BJ (cell line): ENCODE measurements at regions of chr2 and their contacts with region 1.

Region 1: DNA sequence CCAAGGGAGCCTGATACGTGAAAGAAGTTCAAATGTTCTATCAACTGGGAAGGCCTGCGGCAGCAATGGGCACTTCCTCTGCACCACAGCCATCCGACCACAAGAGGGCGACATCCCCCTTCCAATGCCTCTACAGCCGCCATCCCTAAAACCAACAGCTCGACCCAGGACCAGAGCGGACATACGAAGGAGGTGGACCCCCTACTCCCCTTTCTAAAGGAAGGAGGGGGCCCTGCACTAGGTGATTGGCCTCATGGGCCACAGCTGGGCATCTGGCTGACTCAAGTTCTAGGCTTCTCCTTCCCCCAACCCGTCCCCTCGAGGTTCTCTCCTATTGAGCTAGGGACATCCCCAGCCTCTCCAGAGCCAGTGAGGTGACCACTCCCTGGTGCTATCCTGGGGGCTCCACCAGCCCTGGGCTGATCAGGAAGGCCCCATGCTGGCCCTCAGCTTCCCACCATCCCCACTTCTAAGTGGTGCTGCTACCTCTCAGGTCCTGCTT is 217.2 kb downstream of the TNS1 start:
- DNase-seq: no peak
- H3K4me3 ChIP-seq: no peak overlapping the region
- H3K27me3 ChIP-seq: no peaks in the 10 kb centered on the region
- CTCF ChIP-seq: peak; percentile 95

Region 2: GRCh38 chr2:217440000-217440399 is 345.6 kb before region 1 on chr2:
- CTCF ChIA-PET with region 1: no interaction called
- POLR2A ChIA-PET with region 1: no interaction called
- DNase-seq: no peak
- H3K4me3 ChIP-seq: no peak overlapping the region
- H3K27me3 ChIP-seq: no peaks in the 10 kb centered on the region
- CTCF ChIP-seq: no peak

Region 3: DNA sequence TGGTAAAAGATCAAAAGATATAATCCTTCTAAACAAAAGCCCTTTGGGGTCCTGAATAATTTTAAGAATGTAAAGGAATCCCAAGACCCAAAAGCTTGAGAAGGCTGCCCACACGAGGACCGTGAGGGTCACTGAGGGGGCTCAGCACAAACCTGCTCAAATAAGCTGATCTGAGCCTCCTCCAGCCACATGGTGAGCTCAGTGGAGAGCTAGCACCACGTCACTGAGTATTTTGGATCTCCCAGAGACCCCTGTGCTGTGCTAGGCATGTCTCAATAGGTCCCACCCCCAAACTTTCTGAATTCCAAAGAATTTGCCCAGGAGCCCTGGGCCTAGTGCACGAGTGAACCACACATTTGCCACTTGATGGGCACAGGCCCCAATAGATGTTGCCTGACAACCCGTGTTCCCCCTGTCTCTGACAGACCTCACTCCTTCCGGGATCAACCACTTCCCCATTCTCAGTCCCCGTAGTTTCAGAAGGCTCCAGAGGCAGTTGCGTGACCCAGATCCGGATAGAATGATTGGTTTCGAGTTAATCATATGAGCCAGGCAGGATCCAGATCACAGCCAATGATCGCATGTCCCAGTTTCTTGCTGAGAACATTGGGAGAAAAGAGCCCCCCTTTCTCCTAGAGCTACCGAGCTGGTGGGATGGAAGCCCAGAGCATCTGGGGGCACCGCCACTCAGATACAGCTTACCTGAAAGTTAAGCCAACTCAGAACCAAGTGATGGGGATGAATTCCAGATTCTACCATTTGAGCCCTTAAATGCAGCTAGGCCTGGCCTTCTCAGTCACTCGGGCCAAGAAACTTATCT is 13.4 kb after region 1 on chr2:
- CTCF ChIA-PET with region 1: interaction called, 15 read pairs
- POLR2A ChIA-PET with region 1: no interaction called
- DNase-seq: no peak
- H3K4me3 ChIP-seq: no peak overlapping the region
- H3K27me3 ChIP-seq: no peaks in the 10 kb centered on the region
- CTCF ChIP-seq: no peak

Region 4: GRCh38 chr2:217880287-217880889 is 94.8 kb after region 1 on chr2:
- CTCF ChIA-PET with region 1: interaction called, 264 read pairs
- POLR2A ChIA-PET with region 1: no interaction called
- DNase-seq: no peak
- H3K4me3 ChIP-seq: no peak overlapping the region
- H3K27me3 ChIP-seq: no peaks in the 10 kb centered on the region
- CTCF ChIP-seq: no peak

Region 5: GRCh38 chr2:217988014-217988839 is 202.6 kb after region 1 on chr2:
- CTCF ChIA-PET with region 1: interaction called, 36 read pairs
- POLR2A ChIA-PET with region 1: no interaction called
- DNase-seq: no peak
- H3K4me3 ChIP-seq: no peak overlapping the region
- H3K27me3 ChIP-seq: no peaks in the 10 kb centered on the region
- CTCF ChIP-seq: peak; percentile 87

Region 6: GRCh38 chr2:218026676-218027425 is 241.3 kb after region 1 on chr2:
- CTCF ChIA-PET with region 1: interaction called, 176 read pairs
- POLR2A ChIA-PET with region 1: no interaction called
- DNase-seq: no peak
- H3K4me3 ChIP-seq: no peak overlapping the region
- H3K27me3 ChIP-seq: peaks cover 7% of the 10 kb centered on the region
- CTCF ChIP-seq: no peak

Region 7: DNA sequence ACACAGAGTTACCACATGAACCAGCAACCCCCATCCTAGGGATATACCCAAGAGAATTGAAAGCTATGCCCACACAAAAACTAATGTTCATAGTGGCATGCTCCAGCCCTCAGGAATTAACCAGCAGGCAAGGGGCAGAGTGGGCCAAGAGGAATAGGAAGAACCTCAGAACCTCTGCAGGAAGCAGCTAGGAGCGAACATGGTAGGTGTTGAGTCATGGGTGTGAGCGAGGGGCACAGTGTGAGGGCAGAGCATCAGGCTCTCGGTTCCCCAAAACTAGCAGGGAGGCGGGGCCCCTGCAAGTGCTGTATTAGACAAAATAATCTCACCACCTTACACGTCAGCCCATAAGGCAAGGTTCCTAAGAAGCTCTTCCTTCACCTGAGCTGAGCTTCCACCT is 277.9 kb after region 1 on chr2:
- CTCF ChIA-PET with region 1: interaction called, 90 read pairs
- POLR2A ChIA-PET with region 1: no interaction called
- DNase-seq: no peak
- H3K4me3 ChIP-seq: no peak overlapping the region
- H3K27me3 ChIP-seq: peaks cover 28% of the 10 kb centered on the region
- CTCF ChIP-seq: no peak